AG04449 (cell line): ENCODE measurements at regions of chrX and their contacts with region 1.

Region 1: GRCh38 chrX:31036895-31037294 is 34.9 kb downstream of the FTHL17 start:
- DNase-seq: peak; percentile 2
- H3K4me3 ChIP-seq: no peak overlapping the region
- CTCF ChIP-seq: peak; percentile 59

Region 2: GRCh38 chrX:30910124-30910860 is 126.6 kb before region 1 on chrX:
- CTCF ChIA-PET with region 1: no interaction called
- POLR2A ChIA-PET with region 1: no interaction called
- DNase-seq: no peak
- H3K4me3 ChIP-seq: no peak overlapping the region
- CTCF ChIP-seq: no peak

Region 3: DNA sequence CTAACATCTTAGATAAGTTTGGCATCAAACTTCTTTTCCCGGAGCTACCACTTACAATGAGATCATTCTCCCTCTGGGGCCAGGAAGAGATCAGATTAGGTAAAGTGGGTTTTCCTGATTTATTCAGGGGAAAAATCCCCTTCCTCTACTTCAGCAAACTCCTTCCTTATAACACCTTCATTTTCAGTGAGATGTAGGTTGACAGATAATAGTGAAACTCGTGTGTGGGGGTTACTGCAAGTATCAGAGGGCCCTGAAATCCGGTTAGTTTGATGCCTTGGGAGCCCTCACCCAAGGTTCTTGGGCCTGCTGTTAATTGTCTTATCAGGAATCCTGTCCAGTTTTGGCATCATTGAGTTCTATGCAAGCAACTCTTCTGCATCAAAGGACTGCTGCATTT is 24.2 kb after region 1 on chrX:
- CTCF ChIA-PET with region 1: no interaction called
- POLR2A ChIA-PET with region 1: no interaction called
- DNase-seq: no peak
- H3K4me3 ChIP-seq: no peak overlapping the region
- CTCF ChIP-seq: no peak

Region 4: DNA sequence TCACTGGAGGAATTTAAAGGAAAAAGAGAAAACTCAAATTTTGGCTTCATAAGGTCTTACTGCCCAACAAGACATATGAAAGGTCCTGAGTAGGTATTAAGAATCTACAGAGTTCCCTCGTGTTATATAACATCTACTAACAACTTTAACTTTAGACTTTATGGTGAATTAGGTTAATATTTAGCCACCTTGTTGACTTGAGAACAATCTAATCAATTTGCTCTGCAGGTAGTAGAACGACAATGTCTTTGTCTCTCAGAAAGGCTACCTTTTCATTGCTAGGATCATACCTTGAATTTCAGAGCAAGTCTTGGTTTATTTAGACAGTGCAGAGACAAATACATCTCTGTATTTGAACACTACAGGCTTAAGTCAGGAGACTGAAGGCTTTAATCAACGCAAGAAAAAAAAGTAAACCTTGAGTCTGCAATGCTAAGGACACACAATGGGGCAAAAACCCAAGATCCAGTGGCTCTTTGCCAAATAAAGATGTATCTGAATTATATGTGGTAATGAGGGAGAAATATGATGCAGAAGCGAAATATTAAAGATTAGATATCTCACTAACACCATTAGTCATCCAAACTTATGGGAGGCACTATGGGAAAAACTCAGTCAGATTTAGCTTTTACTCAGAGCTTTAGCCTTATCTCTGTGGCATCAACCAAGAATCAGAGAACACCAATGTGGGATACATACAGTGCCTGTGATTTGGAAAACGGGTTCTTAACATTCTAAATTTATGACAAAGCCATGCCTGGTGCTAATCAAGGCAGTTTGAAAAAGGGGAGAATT is 128.5 kb after region 1 on chrX:
- CTCF ChIA-PET with region 1: no interaction called
- POLR2A ChIA-PET with region 1: no interaction called
- DNase-seq: no peak
- H3K4me3 ChIP-seq: no peak overlapping the region
- CTCF ChIP-seq: no peak

Region 5: DNA sequence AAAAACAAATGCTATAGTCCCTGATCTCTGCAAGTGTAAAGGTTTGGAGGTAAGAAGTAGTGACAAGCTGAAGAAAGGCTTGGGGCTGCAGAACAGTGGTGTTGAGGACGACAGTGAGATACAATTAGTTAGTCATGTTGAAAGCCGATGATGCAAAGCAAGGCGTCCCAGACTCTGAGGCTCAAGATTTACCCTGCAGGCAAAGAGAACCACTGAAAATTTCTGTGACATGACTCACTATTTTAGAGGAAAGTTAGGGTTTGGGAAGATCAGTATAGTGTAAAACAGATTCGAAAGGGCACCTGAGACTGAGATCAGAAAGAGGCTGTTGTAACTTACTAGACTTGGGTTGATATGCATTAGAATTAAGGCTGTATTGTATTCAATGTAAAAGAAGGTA is 316.2 kb after region 1 on chrX:
- CTCF ChIA-PET with region 1: no interaction called
- POLR2A ChIA-PET with region 1: no interaction called
- DNase-seq: no peak
- H3K4me3 ChIP-seq: no peak overlapping the region
- CTCF ChIP-seq: no peak

Region 6: GRCh38 chrX:31665454-31665853 is 628.6 kb after region 1 on chrX:
- CTCF ChIA-PET with region 1: interaction called, 171 read pairs
- POLR2A ChIA-PET with region 1: no interaction called
- DNase-seq: no peak
- H3K4me3 ChIP-seq: no peak overlapping the region
- CTCF ChIP-seq: no peak